Activated CD8-positive, alpha-beta T cell treated with anti-CD3 and anti-CD28 coated beads for 36 hours (primary cell): ENCODE measurements at regions of chr7 and their contacts with region 1.

Region 1: GRCh38 chr7:37352974-37353948 is 95.4 kb downstream of the ELMO1 start:
- DNase-seq: peak; percentile 88
- ATAC-seq: peak; percentile 81
- H3K4me3 Mint-ChIP-seq: peak overlapping the region; percentile 93
- H3K27ac Mint-ChIP-seq: peak overlapping the region; percentile 95
- H3K4me1 Mint-ChIP-seq: peaks cover 78% of the 10 kb centered on the region
- H3K27me3 Mint-ChIP-seq: no peaks in the 10 kb centered on the region
- CTCF ChIP-seq: peak; percentile 89

Region 2: DNA sequence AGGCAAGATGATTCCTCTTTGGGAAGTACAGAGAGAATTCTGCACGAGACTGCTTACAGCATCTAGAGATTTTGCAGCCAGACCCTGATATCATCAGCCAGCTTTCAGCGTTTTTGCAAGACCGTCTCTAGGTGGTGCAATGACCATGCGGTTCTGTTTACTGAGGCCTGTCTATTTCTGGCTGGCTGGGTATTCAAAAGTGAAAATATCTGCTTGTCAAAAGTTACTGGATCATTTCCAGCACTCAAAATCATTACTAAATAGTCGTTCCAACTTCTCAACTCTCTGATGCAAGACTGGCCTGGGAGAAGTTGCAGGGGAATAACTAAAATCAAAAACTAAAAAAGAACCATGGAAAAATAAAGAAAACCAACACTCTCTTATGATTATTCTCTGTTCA is 144.7 kb before region 1 on chr7:
- CTCF ChIA-PET with region 1: interaction called, 14 read pairs
- POLR2A ChIA-PET with region 1: no interaction called
- intact Hi-C with region 1: no loop called
- DNase-seq: peak; percentile 9
- ATAC-seq: no peak
- H3K4me3 Mint-ChIP-seq: no peak overlapping the region
- H3K27ac Mint-ChIP-seq: peak overlapping the region; percentile 43
- H3K4me1 Mint-ChIP-seq: peaks cover 16% of the 10 kb centered on the region
- H3K27me3 Mint-ChIP-seq: no peaks in the 10 kb centered on the region
- CTCF ChIP-seq: no peak

Region 3: GRCh38 chr7:37234928-37235327 is 118.3 kb before region 1 on chr7:
- CTCF ChIA-PET with region 1: interaction called, 40 read pairs
- POLR2A ChIA-PET with region 1: no interaction called
- intact Hi-C with region 1: loop called (anchors 10 kb)
- DNase-seq: peak; percentile 14
- ATAC-seq: no peak
- H3K4me3 Mint-ChIP-seq: no peak overlapping the region
- H3K27ac Mint-ChIP-seq: no peak overlapping the region
- H3K4me1 Mint-ChIP-seq: peaks cover 12% of the 10 kb centered on the region
- H3K27me3 Mint-ChIP-seq: no peaks in the 10 kb centered on the region
- CTCF ChIP-seq: peak; percentile 52

Region 4: GRCh38 chr7:37284805-37285231 is 68.4 kb before region 1 on chr7:
- CTCF ChIA-PET with region 1: interaction called, 44 read pairs
- POLR2A ChIA-PET with region 1: no interaction called
- intact Hi-C with region 1: loop called (anchors 2 kb)
- DNase-seq: peak; percentile 36
- ATAC-seq: peak; percentile 27
- H3K4me3 Mint-ChIP-seq: no peak overlapping the region
- H3K27ac Mint-ChIP-seq: no peak overlapping the region
- H3K4me1 Mint-ChIP-seq: peaks cover 33% of the 10 kb centered on the region
- H3K27me3 Mint-ChIP-seq: no peaks in the 10 kb centered on the region
- CTCF ChIP-seq: peak; percentile 86

Region 5: DNA sequence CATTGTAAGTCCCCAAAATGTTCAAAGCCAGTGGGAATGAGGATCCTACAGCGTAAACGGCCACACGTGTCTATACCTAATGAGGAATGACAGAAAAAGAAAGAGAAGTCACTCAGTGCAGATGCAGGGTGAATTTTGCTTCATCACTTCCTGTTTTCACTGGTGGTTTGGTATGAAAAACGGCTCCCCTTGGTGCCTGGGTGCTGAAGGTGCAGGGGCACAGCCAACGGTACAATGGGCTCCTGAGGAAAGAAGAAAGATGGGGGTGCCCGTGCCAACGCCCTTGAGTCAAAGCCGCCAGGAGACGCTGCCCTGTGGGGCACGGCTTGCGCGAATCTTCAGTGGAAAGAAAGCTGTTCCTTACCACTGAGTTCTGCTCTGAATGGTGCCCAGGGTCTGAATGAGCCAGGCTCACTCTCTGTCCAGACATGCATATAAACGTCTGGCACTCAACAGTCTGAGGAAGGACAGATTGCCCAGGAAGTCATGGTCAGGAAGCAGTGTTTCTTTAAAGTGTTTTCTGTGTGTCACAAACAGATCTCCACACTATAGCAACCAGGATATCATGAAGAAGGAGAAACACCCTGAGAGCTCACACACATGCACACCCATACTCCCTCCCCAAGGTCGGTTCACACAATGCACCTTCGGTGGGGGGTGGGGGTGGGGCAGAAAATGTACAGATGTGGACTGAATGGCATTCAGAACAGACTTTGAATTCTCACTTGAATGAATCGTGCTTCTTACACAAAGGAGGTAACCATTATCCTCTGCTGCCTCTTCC is 10.4 kb before region 1 on chr7:
- CTCF ChIA-PET with region 1: interaction called, 28 read pairs
- POLR2A ChIA-PET with region 1: interaction called, 32 read pairs
- intact Hi-C with region 1: no loop called
- DNase-seq: peak; percentile 86
- ATAC-seq: peak; percentile 86
- H3K4me3 Mint-ChIP-seq: peak overlapping the region; percentile 82
- H3K27ac Mint-ChIP-seq: peak overlapping the region; percentile 99
- H3K4me1 Mint-ChIP-seq: peaks cover 55% of the 10 kb centered on the region
- H3K27me3 Mint-ChIP-seq: no peaks in the 10 kb centered on the region
- CTCF ChIP-seq: no peak

Region 6: GRCh38 chr7:37448636-37449361 is 95.5 kb after region 1 on chr7 and contains the start of gene ELMO1:
- CTCF ChIA-PET with region 1: interaction called, 53 read pairs
- POLR2A ChIA-PET with region 1: interaction called, 20 read pairs
- intact Hi-C with region 1: loop called (anchors 5 kb)
- DNase-seq: peak; percentile 87
- ATAC-seq: peak; percentile 85
- H3K4me3 Mint-ChIP-seq: peak within 1 kb of the TSS; percentile 92
- H3K27ac Mint-ChIP-seq: peak within 1 kb of the TSS; percentile 97
- H3K4me1 Mint-ChIP-seq: peaks cover 34% of the 10 kb centered on the region
- H3K27me3 Mint-ChIP-seq: no peaks in the 10 kb centered on the region
- CTCF ChIP-seq: peak; percentile 54
- total RNA-seq, gene ELMO1: 72.8 to 75.3 TPM

Region 7: DNA sequence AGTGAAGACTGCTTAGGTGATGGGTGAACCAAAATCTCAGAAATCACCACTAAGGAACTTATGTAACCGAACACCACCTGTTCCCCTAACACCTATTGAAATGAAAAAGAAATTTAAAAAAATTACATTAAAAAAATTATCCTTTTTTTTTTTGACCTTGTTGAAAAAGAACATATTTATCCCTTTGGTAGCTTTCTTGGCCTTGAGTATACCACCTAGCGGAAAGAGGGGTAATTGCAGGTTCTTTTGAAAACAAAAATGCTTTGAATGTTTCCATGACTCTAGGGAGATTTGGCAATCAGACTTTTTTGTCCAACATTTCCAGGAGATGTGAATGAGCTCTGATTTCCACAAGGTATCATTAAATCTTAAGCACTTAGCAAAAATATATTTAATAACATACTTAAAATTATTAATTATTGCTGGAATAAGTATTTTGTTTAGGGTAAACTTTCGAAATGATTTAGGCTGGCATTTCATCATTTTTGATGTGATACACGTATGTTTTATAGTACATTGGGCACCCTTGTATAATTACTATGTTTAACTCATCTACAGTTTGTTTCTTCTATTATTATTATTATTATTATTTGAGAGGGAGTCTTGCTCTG is 142.4 kb after region 1 on chr7:
- CTCF ChIA-PET with region 1: interaction called, 12 read pairs
- POLR2A ChIA-PET with region 1: no interaction called
- intact Hi-C with region 1: no loop called
- DNase-seq: no peak
- ATAC-seq: peak; percentile 56
- H3K4me3 Mint-ChIP-seq: no peak overlapping the region
- H3K27ac Mint-ChIP-seq: no peak overlapping the region
- H3K4me1 Mint-ChIP-seq: peaks cover 7% of the 10 kb centered on the region
- H3K27me3 Mint-ChIP-seq: no peaks in the 10 kb centered on the region
- CTCF ChIP-seq: peak; percentile 79